ENCODE measurements at regions of chr11 and their contacts with region 1.

Region 1: DNA sequence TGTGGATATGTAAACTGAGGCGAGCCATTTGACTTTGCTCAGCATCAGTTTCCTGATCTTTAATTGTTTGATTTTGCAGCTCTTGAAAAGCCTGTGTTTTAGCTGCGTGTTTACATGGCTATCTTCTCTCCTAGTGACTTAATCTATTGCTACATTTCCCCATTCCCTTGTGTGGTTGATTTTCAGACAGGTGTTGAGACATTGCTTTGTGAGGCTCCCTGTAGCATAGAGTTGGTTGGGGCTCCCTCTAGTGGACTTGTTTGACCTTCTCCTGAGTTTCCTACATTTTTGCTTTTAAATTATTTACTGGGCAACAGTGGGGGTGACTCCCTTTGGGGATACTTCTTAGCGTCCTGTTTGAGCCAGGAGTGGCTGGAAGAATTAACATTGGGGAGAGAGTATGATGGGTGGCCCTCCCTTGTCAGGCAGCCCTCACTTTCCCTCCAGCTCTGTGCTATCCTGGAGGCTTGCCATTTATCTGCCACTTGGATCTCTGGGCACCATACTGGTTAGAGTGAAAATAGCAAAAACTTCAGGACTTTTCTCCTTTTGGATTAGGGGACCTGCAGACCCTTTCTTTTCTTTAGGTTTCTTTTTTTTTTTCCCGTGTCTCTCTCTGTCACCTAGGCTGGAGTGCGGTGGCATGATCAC is 9.2 kb upstream of the CBL start:
- DNase-seq: peak; percentile 93
- H3K4me3 Mint-ChIP-seq: no peak overlapping the region
- H3K27ac Mint-ChIP-seq: no peak overlapping the region
- H3K4me1 Mint-ChIP-seq: peaks cover 6% of the 10 kb centered on the region
- H3K27me3 Mint-ChIP-seq: no peaks in the 10 kb centered on the region
- CTCF ChIP-seq: peak; percentile 80

Region 2: DNA sequence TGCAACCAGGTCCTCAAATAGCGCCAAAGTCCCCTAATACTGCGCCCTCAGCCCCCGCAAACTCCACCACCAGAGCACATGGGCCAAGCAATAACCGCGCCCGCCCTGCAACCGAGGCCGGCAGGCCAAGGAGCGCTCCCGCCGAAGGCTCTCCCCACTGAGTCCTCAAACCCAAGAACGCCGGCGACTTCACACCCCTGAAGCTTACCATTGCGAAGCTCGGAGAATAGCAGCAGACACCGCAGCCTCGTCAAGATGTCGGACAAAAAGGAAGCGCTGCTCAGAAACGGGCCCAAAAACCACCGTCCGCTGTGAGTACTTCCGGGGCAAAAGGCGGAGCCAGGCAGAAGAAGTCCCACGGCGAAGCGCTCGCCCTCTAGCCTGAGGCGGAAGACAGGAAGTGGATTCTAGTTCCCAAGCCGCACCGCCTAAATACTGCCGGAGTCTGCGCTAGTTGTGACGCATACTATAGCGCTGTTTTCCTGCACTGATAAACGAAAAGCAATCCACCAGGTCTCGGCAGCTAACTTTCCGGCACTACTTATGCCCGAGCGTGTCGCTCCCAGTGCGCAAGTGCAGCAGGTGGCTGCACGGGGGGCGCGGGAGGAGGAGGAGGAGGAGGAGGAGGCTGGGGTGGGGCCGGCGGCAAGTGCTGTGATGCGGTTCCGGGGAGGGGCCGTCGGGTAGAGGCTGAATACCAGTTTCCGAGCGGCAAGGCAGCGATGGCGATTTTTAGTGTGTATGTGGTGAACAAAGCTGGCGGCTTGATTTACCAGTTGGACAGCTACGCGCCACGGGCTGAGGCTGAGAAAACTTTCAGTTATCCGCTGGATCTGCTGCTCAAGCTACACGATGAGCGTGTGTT is 178.7 kb before region 1 on chr11 and contains the starts of genes RPS25 and TRAPPC4:
- CTCF ChIA-PET with region 1: no interaction called
- POLR2A ChIA-PET with region 1: interaction called, 4 read pairs
- intact Hi-C with region 1: loop called (anchors 5 kb)
- DNase-seq: peak; percentile 97
- H3K4me3 Mint-ChIP-seq: peak within 1 kb of the TSS; percentile 94
- H3K27ac Mint-ChIP-seq: peak within 1 kb of the TSS; percentile 98
- H3K4me1 Mint-ChIP-seq: peaks cover 22% of the 10 kb centered on the region
- H3K27me3 Mint-ChIP-seq: no peaks in the 10 kb centered on the region
- CTCF ChIP-seq: no peak
- total RNA-seq, gene RPS25: 1,252 and 1,255 TPM in 2 replicates
- total RNA-seq, gene TRAPPC4: 78.6 and 96.5 TPM in 2 replicates

Region 3: DNA sequence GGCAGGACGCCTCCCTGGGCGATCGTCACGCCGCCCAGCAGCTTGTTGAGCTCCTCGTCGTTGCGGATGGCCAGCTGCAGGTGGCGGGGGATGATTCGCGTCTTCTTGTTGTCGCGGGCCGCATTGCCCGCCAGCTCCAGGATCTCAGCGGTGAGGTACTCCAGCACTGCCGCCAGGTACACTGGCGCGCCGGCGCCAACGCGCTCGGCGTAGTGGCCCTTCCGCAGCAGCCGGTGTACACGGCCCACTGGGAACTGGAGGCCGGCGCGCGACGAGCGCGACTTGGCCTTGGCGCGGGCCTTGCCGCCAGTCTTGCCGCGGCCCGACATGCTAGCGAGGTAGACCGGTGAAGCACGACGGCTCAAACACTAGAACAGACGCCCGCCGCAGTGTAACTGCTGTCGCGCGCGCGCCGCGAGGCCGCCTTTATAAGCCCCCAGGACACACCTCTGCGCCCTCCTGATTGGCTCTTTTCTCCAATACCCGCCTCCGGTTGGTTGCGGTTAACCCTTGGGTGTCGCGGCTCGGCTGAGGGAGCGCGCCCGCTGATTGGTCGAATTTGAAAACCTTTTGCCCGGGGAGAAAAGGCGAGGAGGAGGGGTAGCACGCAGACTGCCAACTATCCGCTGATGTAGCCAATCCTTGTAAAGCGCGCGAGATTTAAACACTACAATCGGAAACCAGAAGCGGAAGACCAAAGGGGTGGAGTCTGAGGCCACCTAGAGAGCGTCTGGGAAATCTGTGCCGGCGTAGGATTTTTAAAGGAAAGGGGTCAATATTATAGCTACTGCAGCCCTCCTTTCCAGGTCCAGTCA is 101.7 kb before region 1 on chr11:
- CTCF ChIA-PET with region 1: interaction called, 10 read pairs
- POLR2A ChIA-PET with region 1: interaction called, 5 read pairs
- intact Hi-C with region 1: loop called (anchors 1 kb)
- DNase-seq: peak; percentile 100
- H3K4me3 Mint-ChIP-seq: peak overlapping the region; percentile 89
- H3K27ac Mint-ChIP-seq: peak overlapping the region; percentile 89
- H3K4me1 Mint-ChIP-seq: peaks cover 26% of the 10 kb centered on the region
- H3K27me3 Mint-ChIP-seq: no peaks in the 10 kb centered on the region
- CTCF ChIP-seq: peak; percentile 1

Region 4: GRCh38 chr11:119108146-119108856 is 88.7 kb before region 1 on chr11:
- CTCF ChIA-PET with region 1: interaction called, 15 read pairs
- POLR2A ChIA-PET with region 1: interaction called, 8 read pairs
- intact Hi-C with region 1: no loop called
- DNase-seq: peak; percentile 77
- H3K4me3 Mint-ChIP-seq: peak overlapping the region; percentile 76
- H3K27ac Mint-ChIP-seq: peak overlapping the region; percentile 57
- H3K4me1 Mint-ChIP-seq: peaks cover 13% of the 10 kb centered on the region
- H3K27me3 Mint-ChIP-seq: no peaks in the 10 kb centered on the region
- CTCF ChIP-seq: no peak

Region 5: DNA sequence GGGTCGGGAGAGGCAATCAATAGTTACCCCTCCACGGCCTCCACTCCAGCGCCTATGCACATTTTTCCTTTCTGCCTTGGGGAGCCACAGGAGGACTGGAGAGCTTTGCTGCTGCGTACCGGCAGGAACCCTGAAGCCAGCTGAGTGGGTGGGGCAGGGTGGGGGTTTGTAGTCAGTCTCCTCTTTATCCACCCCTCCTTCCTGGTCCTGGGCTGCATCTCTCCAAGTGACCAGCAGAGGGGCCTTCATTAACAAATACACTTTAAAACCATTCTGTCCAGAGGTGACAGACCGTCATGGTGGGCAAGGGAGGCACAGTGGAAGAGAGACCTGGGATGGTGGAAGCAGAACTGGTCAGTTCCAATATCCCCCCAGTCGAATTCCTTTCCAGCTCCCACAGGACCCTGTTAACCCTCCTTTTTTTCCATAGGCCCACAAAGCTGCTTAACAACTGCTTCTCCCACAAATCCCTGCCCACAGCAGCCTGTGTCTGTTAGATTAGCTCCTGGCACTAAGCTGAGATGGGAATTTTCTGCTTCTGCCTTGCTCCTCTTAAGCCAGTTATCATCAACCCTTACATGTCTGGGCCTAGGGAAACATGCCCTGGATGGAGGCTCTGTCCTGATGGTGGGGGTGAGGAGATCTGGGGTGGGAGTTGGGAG is 52.0 kb before region 1 on chr11:
- CTCF ChIA-PET with region 1: interaction called, 43 read pairs
- POLR2A ChIA-PET with region 1: interaction called, 4 read pairs
- intact Hi-C with region 1: loop called (anchors 1 kb)
- DNase-seq: peak; percentile 72
- H3K4me3 Mint-ChIP-seq: no peak overlapping the region
- H3K27ac Mint-ChIP-seq: no peak overlapping the region
- H3K4me1 Mint-ChIP-seq: no peaks in the 10 kb centered on the region
- H3K27me3 Mint-ChIP-seq: peaks cover 16% of the 10 kb centered on the region
- CTCF ChIP-seq: peak; percentile 65

Region 6: GRCh38 chr11:119179989-119180388 is 17.0 kb before region 1 on chr11:
- CTCF ChIA-PET with region 1: interaction called, 11 read pairs
- POLR2A ChIA-PET with region 1: no interaction called
- intact Hi-C with region 1: no loop called
- DNase-seq: no peak
- H3K4me3 Mint-ChIP-seq: no peak overlapping the region
- H3K27ac Mint-ChIP-seq: no peak overlapping the region
- H3K4me1 Mint-ChIP-seq: no peaks in the 10 kb centered on the region
- H3K27me3 Mint-ChIP-seq: no peaks in the 10 kb centered on the region
- CTCF ChIP-seq: no peak